Mammary epithelial cell (primary cell): ENCODE measurements at regions of chr7 and their contacts with region 1.

Region 1: DNA sequence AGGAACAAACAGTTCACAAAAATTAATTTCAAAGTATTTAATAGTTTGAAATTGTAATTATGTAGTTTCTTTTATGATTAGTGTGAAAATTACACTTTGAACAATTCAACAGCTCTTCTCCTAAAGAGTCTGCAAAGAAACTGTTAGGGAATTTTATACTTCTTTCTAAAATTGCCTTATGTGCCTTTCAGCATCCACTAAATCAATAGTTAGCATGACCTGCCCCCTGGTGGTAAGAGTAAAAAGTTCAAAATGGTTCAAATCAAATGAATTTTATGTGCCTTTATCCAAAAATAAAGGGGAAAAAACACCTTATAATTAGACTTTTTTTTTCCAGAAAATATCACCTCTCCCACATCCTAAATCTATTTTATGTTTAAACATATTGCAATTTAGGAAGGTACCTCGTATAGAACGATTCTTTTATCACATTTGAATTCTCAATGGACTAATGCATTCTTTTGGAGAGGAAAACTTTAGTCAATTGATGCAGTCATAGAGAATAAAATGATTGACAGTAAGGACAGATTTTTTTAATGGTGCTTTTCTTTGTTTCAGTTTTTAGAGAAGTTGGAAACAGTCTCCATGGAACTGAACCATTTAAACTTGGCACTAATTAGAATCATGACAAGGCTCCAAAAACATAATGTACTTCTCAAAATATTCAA is 163.7 kb downstream of the SEMA3D start:
- DNase-seq: peak; percentile 24
- H3K4me3 ChIP-seq: no peak overlapping the region
- H3K27ac ChIP-seq: no peak overlapping the region
- H3K4me1 ChIP-seq: no peaks in the 10 kb centered on the region
- H3K27me3 ChIP-seq: no peaks in the 10 kb centered on the region
- CTCF ChIP-seq: peak; percentile 49 to 58

Region 2: DNA sequence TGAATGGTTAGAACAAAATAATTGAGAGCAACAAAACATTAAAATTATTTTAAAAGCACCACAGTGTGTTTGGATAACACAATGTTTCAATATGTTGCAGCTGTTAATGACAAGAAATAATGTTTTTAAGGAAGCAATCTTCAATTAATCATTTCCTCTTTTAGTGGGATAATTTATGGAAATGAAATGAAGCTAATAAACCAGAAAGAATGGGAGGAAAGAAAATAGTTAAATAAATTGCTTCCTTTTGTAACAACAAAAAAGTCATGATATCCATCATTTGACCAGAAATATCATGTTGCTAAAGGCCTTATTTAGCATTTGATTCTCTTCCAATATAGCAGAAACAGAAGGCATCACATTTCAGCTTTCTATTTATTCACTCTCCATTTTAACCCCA is 1053.1 kb before region 1 on chr7:
- CTCF ChIA-PET with region 1: no interaction called
- dilution Hi-C with region 1: no loop called
- in situ Hi-C with region 1: loop called (anchors 5 to 10 kb)
- intact Hi-C with region 1: no loop called
- DNase-seq: no peak
- H3K4me3 ChIP-seq: no peak overlapping the region
- H3K27ac ChIP-seq: no peak overlapping the region
- H3K4me1 ChIP-seq: no peaks in the 10 kb centered on the region
- H3K27me3 ChIP-seq: no peaks in the 10 kb centered on the region
- CTCF ChIP-seq: no peak

Region 3: DNA sequence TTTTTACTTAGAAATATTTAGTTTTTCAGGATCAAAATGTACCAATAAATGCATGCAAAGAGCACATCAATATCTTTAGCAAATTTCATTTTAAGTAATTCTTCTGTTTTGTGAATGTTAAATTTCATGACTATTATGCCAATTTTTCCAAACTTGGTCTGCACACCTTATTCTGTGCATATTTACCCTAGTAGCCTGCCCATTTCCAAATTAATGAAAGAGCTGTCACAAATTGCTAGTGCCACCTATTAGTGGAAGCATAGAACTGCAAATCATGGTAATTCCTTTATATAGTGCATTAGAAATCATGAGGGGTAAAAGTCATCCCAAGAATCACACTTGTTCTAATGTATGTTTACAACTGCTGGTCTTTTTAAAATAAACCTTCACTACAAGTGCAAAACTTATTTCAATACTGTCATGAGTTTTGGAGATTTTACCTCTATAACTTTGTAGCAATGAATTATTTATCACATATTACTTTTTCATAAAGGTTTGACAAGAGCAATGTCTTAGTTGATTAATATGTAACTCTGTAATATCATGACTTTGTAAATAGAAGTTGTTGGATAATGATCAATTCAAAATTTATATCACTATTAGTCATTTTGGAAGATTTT is 834.3 kb before region 1 on chr7:
- CTCF ChIA-PET with region 1: no interaction called
- dilution Hi-C with region 1: no loop called
- in situ Hi-C with region 1: loop called (anchors 25 kb)
- intact Hi-C with region 1: loop called (anchors 1 kb)
- DNase-seq: no peak
- H3K4me3 ChIP-seq: no peak overlapping the region
- H3K27ac ChIP-seq: peak overlapping the region; percentile 94
- H3K4me1 ChIP-seq: peaks cover 27% of the 10 kb centered on the region
- H3K27me3 ChIP-seq: no peaks in the 10 kb centered on the region
- CTCF ChIP-seq: peak; percentile 46 to 69

Region 4: DNA sequence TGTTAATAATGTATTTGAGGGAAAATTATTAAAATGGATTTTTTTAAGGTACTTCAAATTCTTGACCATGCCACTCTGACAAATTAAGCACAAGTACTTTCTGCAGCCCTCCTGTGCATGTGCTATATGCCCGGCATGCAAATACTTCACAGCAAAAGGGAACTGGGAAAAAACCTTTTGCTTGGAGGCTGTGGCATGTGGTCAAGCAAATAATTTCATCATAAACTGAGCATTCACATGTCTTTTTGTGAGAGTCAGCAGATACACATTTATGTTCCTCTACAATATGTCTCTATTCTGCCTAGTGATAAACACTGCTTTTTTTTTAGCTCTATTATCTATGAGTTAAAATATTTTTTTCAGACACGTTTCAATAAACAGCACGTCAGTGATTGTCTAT is 774.9 kb before region 1 on chr7:
- CTCF ChIA-PET with region 1: no interaction called
- dilution Hi-C with region 1: no loop called
- in situ Hi-C with region 1: no loop called
- intact Hi-C with region 1: loop called (anchors 5 kb)
- DNase-seq: peak; percentile 26
- H3K4me3 ChIP-seq: no peak overlapping the region
- H3K27ac ChIP-seq: no peak overlapping the region
- H3K4me1 ChIP-seq: peaks cover 5% of the 10 kb centered on the region
- H3K27me3 ChIP-seq: no peaks in the 10 kb centered on the region
- CTCF ChIP-seq: no peak

Region 5: GRCh38 chr7:84462259-84462658 is 560.9 kb before region 1 on chr7:
- CTCF ChIA-PET with region 1: no interaction called
- dilution Hi-C with region 1: no loop called
- in situ Hi-C with region 1: loop called in 1 of 2 experiments (anchors 25 kb)
- intact Hi-C with region 1: loop called (anchors 5 kb)
- DNase-seq: no peak
- H3K4me3 ChIP-seq: no peak overlapping the region
- H3K27ac ChIP-seq: no peak overlapping the region
- H3K4me1 ChIP-seq: no peaks in the 10 kb centered on the region
- H3K27me3 ChIP-seq: no peaks in the 10 kb centered on the region
- CTCF ChIP-seq: no peak

Region 6: GRCh38 chr7:85135977-85136376 is 112.8 kb after region 1 on chr7:
- CTCF ChIA-PET with region 1: no interaction called
- dilution Hi-C with region 1: no loop called
- in situ Hi-C with region 1: no loop called
- intact Hi-C with region 1: no loop called
- DNase-seq: peak; percentile 53
- H3K4me3 ChIP-seq: peak overlapping the region in 1 of 3 experiments; percentile 7
- H3K27ac ChIP-seq: peak overlapping the region; percentile 40
- H3K4me1 ChIP-seq: peaks cover 9% of the 10 kb centered on the region
- H3K27me3 ChIP-seq: no peaks in the 10 kb centered on the region
- CTCF ChIP-seq: no peak

Region 7: DNA sequence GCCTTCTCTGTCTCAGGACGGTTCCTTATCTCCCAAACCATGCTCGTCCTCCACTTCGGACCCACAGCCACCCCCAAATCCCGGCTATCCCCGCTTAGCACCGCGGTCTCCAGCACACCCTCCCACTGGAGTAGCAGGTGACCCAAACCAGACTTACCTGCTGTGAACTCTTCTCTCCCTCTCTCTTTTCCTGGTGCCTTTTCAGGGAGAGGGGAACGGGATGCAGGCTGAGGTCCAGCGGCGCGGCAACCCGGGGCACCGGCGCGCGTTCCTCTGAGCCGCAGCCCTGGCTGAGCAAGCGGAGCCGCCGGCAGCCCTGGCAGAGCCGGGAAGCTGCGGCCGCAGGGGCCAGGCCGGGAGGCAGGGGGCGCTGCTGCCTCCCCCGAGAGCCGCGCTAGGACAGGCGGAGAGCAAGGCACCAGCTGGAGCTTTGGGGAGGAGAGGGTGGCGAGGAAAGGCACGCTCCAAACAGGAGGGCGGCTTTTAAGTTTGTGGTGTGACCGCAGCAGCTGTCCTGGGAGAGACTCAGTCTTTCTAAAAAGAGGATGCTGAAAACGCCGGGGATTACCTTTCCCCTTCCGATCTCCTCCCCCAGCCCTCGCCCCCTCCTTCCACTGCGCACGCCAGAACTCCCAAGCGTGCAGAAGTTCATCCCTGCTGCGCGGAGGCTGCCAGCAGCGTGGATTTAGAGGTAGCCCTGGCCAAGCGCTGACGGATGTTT is 163.5 kb after region 1 on chr7 and contains the start of gene SEMA3D:
- CTCF ChIA-PET with region 1: no interaction called
- dilution Hi-C with region 1: no loop called
- in situ Hi-C with region 1: no loop called
- intact Hi-C with region 1: no loop called
- DNase-seq: peak; percentile 86
- H3K4me3 ChIP-seq: peak within 1 kb of the TSS; percentile 82 to 88 (median 85)
- H3K27ac ChIP-seq: no peak within 1 kb of the TSS
- H3K4me1 ChIP-seq: peaks cover 11% of the 10 kb centered on the region
- H3K27me3 ChIP-seq: no peaks in the 10 kb centered on the region
- CTCF ChIP-seq: peak; percentile 80 to 88
- total RNA-seq, gene SEMA3D: 3.5 to 9.5 TPM